RWPE1 (cell line): ENCODE measurements at regions of chr10 and their contacts with region 1.

Region 1: GRCh38 chr10:68212721-68213352 is 19.1 kb downstream of the ATOH7 start:
- DNase-seq: peak; percentile 34
- H3K27ac ChIP-seq: no peak overlapping the region
- CTCF ChIP-seq: peak; percentile 69

Region 2: DNA sequence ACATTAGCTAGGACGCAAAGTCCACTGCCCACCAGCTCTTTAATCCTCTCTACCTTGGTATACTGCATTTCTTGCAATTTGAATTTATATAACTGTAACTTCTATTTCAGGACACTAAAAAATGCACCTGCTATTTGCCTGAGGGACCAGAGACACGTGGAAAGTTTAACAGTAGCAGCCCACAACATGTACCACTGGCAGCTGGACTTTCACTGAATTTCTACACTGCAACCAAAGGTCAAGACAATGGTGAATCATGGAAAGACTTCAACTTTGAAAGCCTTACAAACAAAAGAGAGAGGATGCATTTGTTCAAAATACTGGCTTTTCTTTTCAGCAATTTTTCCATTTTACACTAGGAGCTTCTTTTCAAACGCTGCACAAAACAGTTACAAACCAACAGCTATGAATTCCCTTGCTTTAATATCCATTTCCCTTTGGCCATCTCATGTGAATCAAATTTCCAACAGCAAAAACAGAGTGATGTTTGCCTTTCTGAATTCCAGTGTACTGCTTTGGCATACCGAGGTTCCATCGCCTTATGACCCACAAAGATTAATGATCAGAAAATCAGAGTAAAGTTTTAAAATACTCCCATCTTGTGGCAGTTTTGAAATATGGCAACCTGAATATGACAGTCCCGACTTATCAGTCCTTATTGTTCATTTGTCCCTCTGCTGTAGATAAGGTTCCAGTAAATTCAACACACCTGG is 89.1 kb after region 1 on chr10:
- CTCF ChIA-PET with region 1: interaction called, 54 read pairs
- POLR2A ChIA-PET with region 1: no interaction called
- DNase-seq: peak; percentile 62
- H3K27ac ChIP-seq: no peak overlapping the region
- CTCF ChIP-seq: peak; percentile 58